ENCODE measurements at regions of chr15 and their contacts with region 1.

Region 1: DNA sequence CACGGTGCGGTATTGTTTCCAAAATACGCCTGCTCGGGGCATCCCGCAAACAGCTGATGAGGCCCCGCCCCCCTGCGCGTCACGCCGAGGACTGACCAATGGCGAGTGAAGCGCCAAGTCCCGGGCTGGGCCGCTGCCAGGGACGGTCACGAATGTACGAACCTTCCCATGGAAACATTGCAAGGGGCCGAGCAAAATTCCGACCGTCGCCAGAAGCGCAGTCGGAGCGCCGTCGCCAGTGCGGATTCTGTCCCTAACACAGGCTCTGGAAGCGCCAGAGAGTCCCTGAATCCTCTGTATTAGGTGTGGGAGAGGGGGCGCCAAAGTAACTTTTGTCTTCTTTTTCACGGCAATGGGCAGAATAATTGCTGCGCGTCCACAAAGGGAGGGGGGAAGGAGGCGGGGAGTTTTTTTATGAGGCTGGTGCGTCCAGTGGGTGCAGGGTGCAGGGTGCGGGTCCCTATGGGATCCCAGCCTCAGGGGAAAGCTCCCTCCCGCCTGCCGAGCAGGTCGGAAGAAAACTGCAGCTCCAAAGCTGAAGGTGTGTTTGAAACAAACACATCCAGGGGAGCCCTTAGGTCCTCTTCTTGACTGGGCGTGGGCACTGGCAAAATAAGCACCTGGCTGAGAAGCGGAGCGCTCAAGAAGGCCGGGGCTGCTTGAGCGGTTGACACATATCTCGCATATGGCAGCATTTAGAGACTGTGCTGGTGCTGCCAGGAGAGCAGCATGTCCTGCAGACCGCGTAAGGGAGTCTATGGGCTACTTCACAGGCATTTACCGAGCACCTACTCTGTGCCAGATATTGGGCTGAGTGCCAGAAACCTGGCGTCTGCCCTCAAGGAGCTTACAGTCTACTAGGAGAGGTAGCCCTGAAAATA is at the start of gene BMF:
- DNase-seq: peak; percentile 98
- ATAC-seq: peak; percentile 51
- H3K4me3 Mint-ChIP-seq: peak within 1 kb of the TSS; percentile 78
- H3K27ac Mint-ChIP-seq: peak within 1 kb of the TSS; percentile 76
- H3K4me1 Mint-ChIP-seq: peaks cover 48% of the 10 kb centered on the region
- H3K27me3 Mint-ChIP-seq: peaks cover 2% of the 10 kb centered on the region
- total RNA-seq, gene BMF: 7.6 to 8.4 TPM

Region 2: DNA sequence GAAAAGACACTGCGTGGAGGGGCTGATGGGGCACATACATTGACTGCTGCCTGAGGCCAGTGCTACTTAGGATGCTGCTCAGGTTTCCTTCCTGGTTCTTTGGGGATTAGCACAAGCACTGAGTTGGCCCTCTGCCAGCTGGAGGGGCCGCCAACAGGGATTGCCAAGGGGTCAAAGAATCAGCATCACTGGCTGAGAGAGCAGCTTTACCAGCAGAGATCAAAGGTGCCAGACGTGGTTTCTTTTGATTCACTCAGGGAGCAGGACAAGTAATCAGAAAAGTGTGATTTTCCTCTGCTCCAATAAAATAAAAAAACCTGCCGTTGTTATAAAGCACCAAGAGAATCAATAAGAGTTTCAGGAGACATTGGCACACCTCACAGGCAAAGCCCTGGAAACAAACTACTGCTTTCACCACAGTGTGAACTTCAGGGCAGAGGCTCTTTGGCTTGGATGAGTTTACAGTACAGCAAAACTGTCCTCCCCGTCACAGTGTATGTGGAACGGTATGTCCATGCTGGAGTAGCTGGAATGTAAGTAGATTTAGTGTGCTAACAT is 280.6 kb before region 1 on chr15:
- CTCF ChIA-PET with region 1: no interaction called
- POLR2A ChIA-PET with region 1: no interaction called
- intact Hi-C with region 1: no loop called
- DNase-seq: no peak
- ATAC-seq: no peak
- H3K4me3 Mint-ChIP-seq: no peak overlapping the region
- H3K27ac Mint-ChIP-seq: no peak overlapping the region
- H3K4me1 Mint-ChIP-seq: no peaks in the 10 kb centered on the region
- H3K27me3 Mint-ChIP-seq: peaks cover 28% of the 10 kb centered on the region

Region 3: GRCh38 chr15:39908186-39908585 is 200.9 kb before region 1 on chr15:
- CTCF ChIA-PET with region 1: no interaction called
- POLR2A ChIA-PET with region 1: no interaction called
- intact Hi-C with region 1: no loop called
- DNase-seq: peak; percentile 22
- ATAC-seq: peak; percentile 74
- H3K4me3 Mint-ChIP-seq: no peak overlapping the region
- H3K27ac Mint-ChIP-seq: no peak overlapping the region
- H3K4me1 Mint-ChIP-seq: peaks cover 2% of the 10 kb centered on the region
- H3K27me3 Mint-ChIP-seq: peaks cover 2% of the 10 kb centered on the region

Region 4: GRCh38 chr15:39920510-39921273 is 188.4 kb before region 1 on chr15:
- CTCF ChIA-PET with region 1: no interaction called
- POLR2A ChIA-PET with region 1: no interaction called
- intact Hi-C with region 1: loop called in 1 of 2 experiments (anchors 2 kb)
- DNase-seq: peak; percentile 93
- ATAC-seq: peak; percentile 89
- H3K4me3 Mint-ChIP-seq: peak overlapping the region; percentile 73
- H3K27ac Mint-ChIP-seq: peak overlapping the region; percentile 73
- H3K4me1 Mint-ChIP-seq: peaks cover 29% of the 10 kb centered on the region
- H3K27me3 Mint-ChIP-seq: peaks cover 19% of the 10 kb centered on the region

Region 5: DNA sequence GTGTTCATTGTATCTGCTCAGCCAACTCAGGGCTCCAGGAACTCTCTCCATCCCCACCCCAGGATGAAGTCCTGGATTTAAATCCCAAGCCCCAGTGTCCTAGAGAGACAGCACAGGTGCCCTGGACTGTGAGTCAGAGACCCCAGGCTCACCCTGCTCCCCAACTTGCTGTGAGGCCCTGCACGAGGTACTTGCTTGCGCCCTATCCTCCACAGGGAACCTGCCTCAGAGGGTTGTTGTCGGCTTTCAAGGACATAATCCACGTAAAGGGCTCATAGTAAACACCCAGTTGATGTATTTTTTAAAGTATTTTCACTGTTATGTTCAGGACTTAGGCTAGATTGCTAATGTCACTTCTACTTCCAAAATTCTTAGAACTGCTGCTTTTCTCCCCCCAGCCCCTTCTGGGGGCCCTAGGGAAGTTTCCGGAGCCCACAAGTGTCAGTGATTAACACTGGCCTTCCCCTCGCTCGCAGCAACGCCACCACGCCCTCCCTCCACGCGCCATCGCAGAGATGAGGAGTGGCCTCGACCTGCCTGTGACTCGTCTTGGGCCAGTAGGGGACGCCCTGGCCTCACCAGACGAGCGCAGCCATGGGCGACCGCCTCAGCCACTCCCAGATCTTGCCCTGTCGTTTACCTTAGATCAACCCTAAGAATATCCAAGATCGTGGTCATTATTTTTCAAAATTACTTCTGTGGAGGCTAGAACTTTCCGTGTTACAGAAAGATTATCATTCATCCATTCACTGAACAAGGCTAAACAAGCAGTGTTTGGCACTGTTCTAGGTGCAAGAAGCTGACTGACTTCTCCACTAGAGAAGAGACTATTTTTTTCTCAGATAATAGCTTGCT is 64.2 kb before region 1 on chr15:
- CTCF ChIA-PET with region 1: interaction called, 110 read pairs
- POLR2A ChIA-PET with region 1: interaction called, 20 read pairs
- intact Hi-C with region 1: loop called (anchors 1 kb)
- DNase-seq: peak; percentile 94
- ATAC-seq: peak; percentile 75
- H3K4me3 Mint-ChIP-seq: peak overlapping the region; percentile 46
- H3K27ac Mint-ChIP-seq: peak overlapping the region; percentile 47
- H3K4me1 Mint-ChIP-seq: peaks cover 76% of the 10 kb centered on the region
- H3K27me3 Mint-ChIP-seq: no peaks in the 10 kb centered on the region

Region 6: GRCh38 chr15:40081691-40082194 is 27.4 kb before region 1 on chr15:
- CTCF ChIA-PET with region 1: interaction called, 17 read pairs
- POLR2A ChIA-PET with region 1: no interaction called
- intact Hi-C with region 1: no loop called
- DNase-seq: peak; percentile 42
- ATAC-seq: peak; percentile 48
- H3K4me3 Mint-ChIP-seq: peak overlapping the region; percentile 23
- H3K27ac Mint-ChIP-seq: peak overlapping the region; percentile 8
- H3K4me1 Mint-ChIP-seq: peaks cover 43% of the 10 kb centered on the region
- H3K27me3 Mint-ChIP-seq: peaks cover 23% of the 10 kb centered on the region

Region 7: DNA sequence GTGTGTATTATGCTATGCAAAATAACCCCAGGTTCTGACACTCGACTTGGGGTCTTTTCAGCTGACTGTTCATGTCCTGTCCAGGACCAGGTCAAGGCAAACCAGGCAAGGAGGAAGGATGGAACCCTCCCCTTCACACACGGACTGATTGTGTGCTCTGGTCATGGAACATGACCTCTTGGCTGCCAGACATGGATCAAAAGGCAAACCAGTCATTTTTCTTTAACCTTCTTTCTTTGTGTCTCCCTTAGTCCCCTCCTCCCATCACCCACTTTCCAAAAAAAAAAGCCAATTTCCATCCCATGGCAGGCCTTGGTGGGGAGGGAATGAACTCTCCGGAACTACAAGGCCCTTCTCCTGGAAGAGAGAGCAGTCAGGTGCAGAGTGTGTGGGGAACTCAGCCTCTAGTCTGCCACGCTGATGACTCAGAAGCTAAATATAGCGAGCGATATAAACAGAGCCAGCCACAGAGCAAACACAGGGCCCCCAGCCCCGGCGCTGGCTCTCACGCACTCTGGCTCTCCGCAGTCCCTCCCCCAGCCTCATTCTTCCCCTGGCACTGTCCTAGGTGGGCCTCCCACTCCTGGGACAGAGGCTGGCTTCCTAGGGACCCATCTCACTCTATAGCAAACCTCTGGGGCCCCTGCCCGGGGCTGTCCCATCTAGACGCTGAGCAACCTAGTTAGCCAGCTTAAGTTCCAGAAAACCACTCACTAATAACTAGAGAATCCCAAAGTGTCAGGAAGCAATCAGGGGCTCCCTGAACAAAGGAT is 10.4 kb before region 1 on chr15:
- CTCF ChIA-PET with region 1: interaction called, 85 read pairs
- POLR2A ChIA-PET with region 1: interaction called, 17 read pairs
- intact Hi-C with region 1: loop called (anchors 1 kb)
- DNase-seq: peak; percentile 87
- ATAC-seq: peak; percentile 94
- H3K4me3 Mint-ChIP-seq: peak overlapping the region; percentile 65
- H3K27ac Mint-ChIP-seq: peak overlapping the region; percentile 97
- H3K4me1 Mint-ChIP-seq: peaks cover 81% of the 10 kb centered on the region
- H3K27me3 Mint-ChIP-seq: no peaks in the 10 kb centered on the region

Measured in activated CD4-positive, alpha-beta T cell treated with anti-CD3 and anti-CD28 coated beads for 36 hours (primary cell).